ENCODE measurements at regions of chr13 and their contacts with region 1.

Region 1: GRCh38 chr13:24995226-24995804 is 100.6 kb upstream of the PABPC3 start:
- DNase-seq: peak; percentile 81
- H3K4me3 Mint-ChIP-seq: no peak overlapping the region
- H3K27ac Mint-ChIP-seq: no peak overlapping the region
- H3K4me1 Mint-ChIP-seq: peaks cover 3% of the 10 kb centered on the region
- H3K27me3 Mint-ChIP-seq: peaks cover 14% of the 10 kb centered on the region

Region 2: GRCh38 chr13:24683838-24684599 is 311.3 kb before region 1 on chr13:
- CTCF ChIA-PET with region 1: no interaction called
- intact Hi-C with region 1: loop called (anchors 2 kb)
- DNase-seq: peak; percentile 77
- H3K4me3 Mint-ChIP-seq: no peak overlapping the region
- H3K27ac Mint-ChIP-seq: peak overlapping the region; percentile 44
- H3K4me1 Mint-ChIP-seq: peaks cover 31% of the 10 kb centered on the region
- H3K27me3 Mint-ChIP-seq: peaks cover 40% of the 10 kb centered on the region

Region 3: GRCh38 chr13:24747248-24748060 is 247.9 kb before region 1 on chr13:
- CTCF ChIA-PET with region 1: interaction called, 4 read pairs
- intact Hi-C with region 1: loop called (anchors 10 kb)
- DNase-seq: peak; percentile 29
- H3K4me3 Mint-ChIP-seq: peak overlapping the region; percentile 57
- H3K27ac Mint-ChIP-seq: no peak overlapping the region
- H3K4me1 Mint-ChIP-seq: peaks cover 11% of the 10 kb centered on the region
- H3K27me3 Mint-ChIP-seq: peaks cover 46% of the 10 kb centered on the region

Region 4: DNA sequence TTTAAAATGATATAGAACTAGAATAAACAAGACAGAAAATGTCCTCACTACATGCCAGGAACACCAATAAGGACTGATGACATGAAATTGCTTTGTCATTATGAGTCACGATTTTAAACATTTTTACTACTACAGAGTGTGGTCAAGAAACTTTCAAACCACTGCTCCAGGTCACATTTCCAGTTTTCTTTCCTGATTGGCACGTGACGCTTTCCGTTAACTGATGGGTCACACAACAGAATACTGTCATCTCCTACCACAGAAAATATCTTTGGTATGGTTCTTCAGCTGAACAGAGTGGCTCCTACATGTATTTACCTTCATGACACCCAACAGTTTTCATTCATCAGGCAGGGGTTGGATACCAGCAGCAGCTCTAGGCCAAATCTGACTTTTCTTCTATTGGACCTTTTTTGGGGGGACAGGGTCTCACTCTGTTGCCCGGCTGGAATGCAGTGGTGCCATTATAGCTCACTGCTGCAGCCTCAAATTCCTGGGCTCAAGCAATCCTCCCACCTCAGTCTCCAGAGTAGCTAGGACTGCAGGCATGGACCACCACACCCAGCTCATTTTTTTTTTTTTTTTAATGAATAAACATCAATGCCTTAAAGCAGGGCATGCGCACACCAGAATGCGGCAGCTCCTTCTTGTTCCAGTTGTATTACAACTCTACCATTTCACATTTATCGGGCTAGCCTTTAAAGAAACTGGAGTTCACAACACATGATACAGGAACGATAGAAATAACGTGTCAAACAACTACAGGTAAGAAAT is 84.0 kb before region 1 on chr13:
- CTCF ChIA-PET with region 1: no interaction called
- intact Hi-C with region 1: no loop called
- DNase-seq: no peak
- H3K4me3 Mint-ChIP-seq: no peak overlapping the region
- H3K27ac Mint-ChIP-seq: no peak overlapping the region
- H3K4me1 Mint-ChIP-seq: peaks cover 3% of the 10 kb centered on the region
- H3K27me3 Mint-ChIP-seq: no peaks in the 10 kb centered on the region

Region 5: GRCh38 chr13:24922745-24923591 is 72.3 kb before region 1 on chr13:
- CTCF ChIA-PET with region 1: interaction called, 5 read pairs
- intact Hi-C with region 1: loop called (anchors 2 kb)
- DNase-seq: peak; percentile 96
- H3K4me3 Mint-ChIP-seq: peak overlapping the region; percentile 94
- H3K27ac Mint-ChIP-seq: peak overlapping the region; percentile 85
- H3K4me1 Mint-ChIP-seq: peaks cover 8% of the 10 kb centered on the region
- H3K27me3 Mint-ChIP-seq: no peaks in the 10 kb centered on the region

Region 6: DNA sequence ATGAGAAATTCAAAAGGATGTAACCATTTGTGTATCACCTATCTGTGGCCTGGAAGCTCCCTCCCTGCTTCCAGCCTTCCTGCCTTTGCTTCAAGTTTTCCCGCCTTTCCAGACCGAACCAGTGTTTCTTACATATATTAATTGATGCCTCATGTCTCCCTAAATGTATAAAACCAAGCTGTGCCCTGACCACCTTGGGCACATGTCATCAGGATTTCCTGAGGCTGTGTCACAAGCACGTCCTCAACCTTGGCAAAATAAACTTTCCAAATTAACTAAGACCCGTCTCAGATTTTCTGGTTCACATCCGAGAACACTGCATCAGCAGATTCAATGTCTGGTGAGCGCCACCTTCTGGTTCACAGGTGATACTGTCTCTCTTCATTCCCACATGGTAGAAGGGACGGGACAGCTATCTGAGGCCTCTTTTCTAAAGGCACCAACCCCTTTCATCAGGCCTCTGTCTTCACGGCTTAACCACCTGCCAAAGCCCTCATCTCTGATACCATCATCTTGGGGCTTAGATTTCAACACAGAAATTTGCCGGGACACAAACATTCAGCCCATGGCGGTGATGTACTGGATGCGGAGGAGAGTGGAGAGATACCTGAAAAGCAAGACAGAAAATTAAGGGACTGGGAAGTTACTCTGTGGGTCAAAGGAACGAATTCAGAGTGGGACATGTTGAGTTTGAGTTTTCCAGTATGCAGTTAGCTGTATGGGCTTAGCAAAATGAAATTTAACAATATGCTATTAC is 41.9 kb after region 1 on chr13:
- CTCF ChIA-PET with region 1: interaction called, 10 read pairs
- intact Hi-C with region 1: loop called (anchors 1 kb)
- DNase-seq: peak; percentile 69
- H3K4me3 Mint-ChIP-seq: no peak overlapping the region
- H3K27ac Mint-ChIP-seq: no peak overlapping the region
- H3K4me1 Mint-ChIP-seq: no peaks in the 10 kb centered on the region
- H3K27me3 Mint-ChIP-seq: peaks cover 33% of the 10 kb centered on the region

Region 7: DNA sequence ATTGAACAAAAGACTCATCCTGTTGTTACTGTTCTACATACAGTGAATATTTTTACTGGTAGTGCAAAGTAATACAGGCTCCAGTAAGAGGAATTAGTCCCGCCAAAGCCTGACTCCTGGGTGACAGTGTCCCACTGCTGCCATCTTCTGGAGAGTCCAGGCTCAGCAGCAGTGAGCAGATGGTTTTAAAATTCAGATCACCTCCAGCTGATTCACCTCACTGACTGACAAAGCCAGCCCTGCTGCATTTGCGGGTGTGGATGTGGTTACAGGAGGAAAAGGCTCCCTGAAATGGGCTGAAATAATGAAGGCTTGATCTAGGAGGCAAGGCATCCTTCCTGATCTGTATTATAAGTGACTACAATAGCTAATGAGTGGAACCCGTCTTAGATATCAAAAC is 118.9 kb after region 1 on chr13:
- CTCF ChIA-PET with region 1: interaction called, 11 read pairs
- intact Hi-C with region 1: loop called (anchors 1 kb)
- DNase-seq: peak; percentile 81
- H3K4me3 Mint-ChIP-seq: no peak overlapping the region
- H3K27ac Mint-ChIP-seq: no peak overlapping the region
- H3K4me1 Mint-ChIP-seq: peaks cover 3% of the 10 kb centered on the region
- H3K27me3 Mint-ChIP-seq: peaks cover 33% of the 10 kb centered on the region

Region 8: DNA sequence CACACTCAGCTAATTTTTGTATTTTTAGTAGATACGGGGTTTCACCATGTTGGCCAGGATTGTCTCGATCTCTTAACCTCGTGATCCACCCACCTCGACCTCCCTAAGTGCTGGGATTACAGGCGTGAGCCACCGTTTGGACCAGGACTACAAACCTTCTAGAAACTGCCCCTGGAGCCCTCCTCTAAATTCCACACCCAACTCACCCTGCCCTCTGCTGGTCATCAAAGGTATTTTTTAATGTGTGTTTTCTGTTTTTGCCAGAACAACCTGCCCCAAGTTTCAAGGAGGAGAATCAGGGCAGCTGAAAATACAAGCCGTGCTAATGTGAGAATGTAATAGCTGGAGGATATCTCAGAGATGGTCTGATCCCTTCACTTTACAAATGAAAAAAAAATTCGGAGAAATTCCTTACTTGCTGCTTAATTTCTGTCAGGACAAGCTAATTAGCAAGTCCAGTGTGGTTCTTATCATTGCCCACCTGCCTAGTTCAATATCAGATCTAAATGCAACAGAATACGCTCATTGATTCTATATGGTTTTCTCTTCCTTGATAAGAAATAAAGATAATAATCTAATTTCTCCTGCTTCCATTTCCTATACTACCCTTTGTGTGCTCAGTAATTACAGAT is 380.5 kb after region 1 on chr13:
- CTCF ChIA-PET with region 1: interaction called, 4 read pairs
- intact Hi-C with region 1: loop called (anchors 5 kb)
- DNase-seq: peak; percentile 40
- H3K4me3 Mint-ChIP-seq: no peak overlapping the region
- H3K27ac Mint-ChIP-seq: no peak overlapping the region
- H3K4me1 Mint-ChIP-seq: peaks cover 4% of the 10 kb centered on the region
- H3K27me3 Mint-ChIP-seq: peaks cover 46% of the 10 kb centered on the region